ENCODE measurements at regions of chr11 and their contacts with region 1.

Region 1: DNA sequence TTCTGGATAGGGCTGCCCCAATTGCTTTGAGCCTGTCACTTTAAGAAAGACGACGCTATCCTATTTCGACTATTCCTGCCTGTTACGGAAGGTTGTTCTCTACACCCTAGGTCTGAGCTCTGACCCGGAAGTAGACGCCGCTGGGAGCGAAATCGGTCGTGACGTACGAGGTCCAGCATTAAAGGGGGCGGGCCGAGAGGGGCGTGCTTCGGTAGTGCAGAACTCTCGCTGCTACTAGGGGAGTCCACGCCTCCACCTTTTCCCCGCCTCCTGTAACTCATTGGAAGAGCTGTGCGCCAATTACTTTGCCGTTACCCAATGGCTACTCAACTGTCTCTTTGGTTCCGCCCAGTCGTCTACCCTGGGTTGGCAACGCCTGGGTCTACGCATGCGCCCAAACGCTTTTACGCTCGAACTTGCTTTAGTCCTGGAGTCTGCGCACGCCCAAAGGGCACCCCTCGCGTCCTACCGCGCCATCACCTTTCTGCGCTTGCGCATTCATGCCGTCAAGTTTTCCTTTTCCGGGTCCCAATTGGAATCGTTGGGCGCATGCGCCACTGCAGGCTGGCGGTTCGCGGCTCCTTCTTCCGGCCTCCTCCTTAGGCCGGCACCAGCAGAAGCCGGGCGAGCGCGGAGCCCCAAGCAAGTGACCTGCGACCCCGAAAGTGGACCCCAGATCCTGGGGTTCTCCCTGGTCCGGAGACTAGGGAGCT is at the start of gene PCNX3:
- DNase-seq: peak; percentile 95 to 100 (median 100)
- ATAC-seq: peak; percentile 92
- H3K4me3 ChIP-seq: peak within 1 kb of the TSS; percentile 89
- H3K4me3 Mint-ChIP-seq: peak within 1 kb of the TSS; percentile 94 to 99 (median 97)
- H3K27ac ChIP-seq: peak within 1 kb of the TSS; percentile 98
- H3K27ac Mint-ChIP-seq: peak within 1 kb of the TSS; percentile 90 to 99 (median 97)
- H3K4me1 ChIP-seq: peaks cover 42 to 45% of the 10 kb centered on the region in 2 donors
- H3K4me1 Mint-ChIP-seq: peaks cover 28 to 49% (median 39%) of the 10 kb centered on the region in 7 donors
- H3K27me3 ChIP-seq: no peaks in the 10 kb centered on the region
- H3K27me3 Mint-ChIP-seq: peaks cover 0 to 6% (median 0%) of the 10 kb centered on the region in 5 donors
- total RNA-seq, gene PCNX3: 50.4 to 64.9 (median 56.6) TPM

Region 2: GRCh38 chr11:65117216-65118096 is 497.9 kb before region 1 on chr11 and contains the start of gene ZNHIT2:
- CTCF ChIA-PET with region 1: no interaction called
- POLR2A ChIA-PET with region 1: interaction called, 3 read pairs
- intact Hi-C with region 1: loop called in 1 of 2 experiments (anchors 1 kb)
- DNase-seq: peak; percentile 94 to 100 (median 100)
- ATAC-seq: peak; percentile 85
- H3K4me3 ChIP-seq: peak within 1 kb of the TSS; percentile 92
- H3K4me3 Mint-ChIP-seq: peak within 1 kb of the TSS; percentile 91 to 95 (median 92)
- H3K27ac ChIP-seq: peak within 1 kb of the TSS; percentile 99
- H3K27ac Mint-ChIP-seq: peak within 1 kb of the TSS; percentile 86 to 100 (median 96)
- H3K4me1 ChIP-seq: peaks cover 28 to 37% of the 10 kb centered on the region in 2 donors
- H3K4me1 Mint-ChIP-seq: peaks cover 20 to 77% (median 53%) of the 10 kb centered on the region in 7 donors
- H3K27me3 ChIP-seq: no peaks in the 10 kb centered on the region
- H3K27me3 Mint-ChIP-seq: no peaks in the 10 kb centered on the region
- total RNA-seq, gene ZNHIT2: 9.9 to 18.2 (median 11.3) TPM

Region 3: DNA sequence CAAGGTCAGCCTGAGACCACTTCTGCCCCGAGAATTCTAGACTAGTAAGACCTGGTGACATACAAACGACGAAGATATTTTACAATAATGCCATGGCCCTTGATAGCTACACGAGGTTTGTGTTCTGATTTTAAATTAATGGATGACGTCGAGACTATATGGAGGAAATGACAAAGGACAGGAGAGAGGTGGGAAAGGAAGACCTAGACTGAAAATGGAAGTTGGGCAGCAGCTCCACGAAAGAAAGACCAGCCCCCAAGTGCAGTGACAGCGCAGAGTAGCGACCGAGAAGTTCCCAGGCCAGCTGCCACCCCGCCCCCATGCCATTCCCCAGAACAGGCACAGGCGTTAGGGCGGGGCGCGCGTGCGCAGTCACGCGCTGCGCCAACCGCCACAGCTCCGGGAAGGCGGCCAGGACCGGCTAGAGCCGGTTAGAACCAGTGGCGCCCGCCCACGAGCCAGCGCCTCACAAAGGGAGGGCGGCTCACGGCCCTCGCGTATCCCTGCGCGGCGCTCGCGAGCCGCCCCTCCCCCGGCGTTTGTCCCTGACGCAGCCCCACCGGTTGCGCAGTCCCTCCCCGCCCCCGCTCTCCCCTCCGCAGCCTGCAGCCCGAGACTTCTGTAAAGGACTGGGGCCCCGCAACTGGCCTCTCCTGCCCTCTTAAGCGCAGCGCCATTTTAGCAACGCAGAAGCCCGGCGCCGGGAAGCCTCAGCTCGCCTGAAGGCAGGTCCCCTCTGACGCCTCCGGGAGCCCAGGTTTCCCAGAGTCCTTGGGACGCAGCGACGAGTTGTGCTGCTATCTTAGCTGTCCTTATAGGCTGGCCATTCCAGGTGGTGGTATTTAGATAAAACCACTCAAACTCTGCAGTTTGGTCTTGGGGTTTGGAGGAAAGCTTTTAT is 118.0 kb before region 1 on chr11:
- CTCF ChIA-PET with region 1: no interaction called
- POLR2A ChIA-PET with region 1: interaction called, 34 read pairs
- intact Hi-C with region 1: no loop called
- DNase-seq: peak; percentile 95 to 99 (median 98)
- ATAC-seq: peak; percentile 89
- H3K4me3 ChIP-seq: peak overlapping the region; percentile 99
- H3K4me3 Mint-ChIP-seq: no peak overlapping the region
- H3K27ac ChIP-seq: peak overlapping the region; percentile 99
- H3K27ac Mint-ChIP-seq: no peak overlapping the region
- H3K4me1 ChIP-seq: peaks cover 11 to 12% of the 10 kb centered on the region in 2 donors
- H3K4me1 Mint-ChIP-seq: peaks cover 13 to 43% (median 24%) of the 10 kb centered on the region in 7 donors
- H3K27me3 ChIP-seq: no peaks in the 10 kb centered on the region
- H3K27me3 Mint-ChIP-seq: peaks cover 0 to 6% (median 0%) of the 10 kb centered on the region in 5 donors

Region 4: GRCh38 chr11:65588199-65589054 is 27.0 kb before region 1 on chr11:
- CTCF ChIA-PET with region 1: interaction called, 12 read pairs
- POLR2A ChIA-PET with region 1: interaction called, 6 read pairs
- intact Hi-C with region 1: loop called (anchors 1 to 2 kb)
- DNase-seq: peak; percentile 35 to 83 (median 75)
- ATAC-seq: peak; percentile 91
- H3K4me3 ChIP-seq: no peak overlapping the region
- H3K4me3 Mint-ChIP-seq: peak overlapping the region in 1 of 10 donors; percentile 76
- H3K27ac ChIP-seq: peak overlapping the region; percentile 43
- H3K27ac Mint-ChIP-seq: peak overlapping the region; percentile 38 to 86 (median 76)
- H3K4me1 ChIP-seq: peaks cover 11 to 16% of the 10 kb centered on the region in 2 donors
- H3K4me1 Mint-ChIP-seq: peaks cover 16 to 43% (median 21%) of the 10 kb centered on the region in 7 donors
- H3K27me3 ChIP-seq: no peaks in the 10 kb centered on the region
- H3K27me3 Mint-ChIP-seq: no peaks in the 10 kb centered on the region

Region 5: GRCh38 chr11:65662799-65663638 is 47.6 kb after region 1 on chr11 and contains the start of gene RELA:
- CTCF ChIA-PET with region 1: interaction called, 3 read pairs
- POLR2A ChIA-PET with region 1: interaction called, 46 read pairs
- intact Hi-C with region 1: loop called (anchors 1 kb)
- DNase-seq: peak; percentile 84 to 92 (median 89)
- ATAC-seq: peak; percentile 92
- H3K4me3 ChIP-seq: peak within 1 kb of the TSS; percentile 85
- H3K4me3 Mint-ChIP-seq: peak within 1 kb of the TSS; percentile 86 to 93 (median 90)
- H3K27ac ChIP-seq: peak within 1 kb of the TSS; percentile 99
- H3K27ac Mint-ChIP-seq: peak within 1 kb of the TSS; percentile 86 to 95 (median 92)
- H3K4me1 ChIP-seq: peaks cover 20 to 33% of the 10 kb centered on the region in 2 donors
- H3K4me1 Mint-ChIP-seq: peaks cover 10 to 43% (median 31%) of the 10 kb centered on the region in 7 donors
- H3K27me3 ChIP-seq: no peaks in the 10 kb centered on the region
- H3K27me3 Mint-ChIP-seq: no peaks in the 10 kb centered on the region
- total RNA-seq, gene RELA: 106 to 303 (median 165) TPM

Region 6: GRCh38 chr11:65961232-65961901 is 346.0 kb after region 1 on chr11 and contains the start of gene SART1:
- CTCF ChIA-PET with region 1: no interaction called
- POLR2A ChIA-PET with region 1: no interaction called
- intact Hi-C with region 1: loop called in 1 of 2 experiments (anchors 1 kb)
- DNase-seq: peak; percentile 81 to 97 (median 94)
- ATAC-seq: peak; percentile 96
- H3K4me3 ChIP-seq: peak within 1 kb of the TSS; percentile 83
- H3K4me3 Mint-ChIP-seq: peak within 1 kb of the TSS; percentile 93 to 99 (median 98)
- H3K27ac ChIP-seq: peak within 1 kb of the TSS; percentile 96
- H3K27ac Mint-ChIP-seq: peak within 1 kb of the TSS; percentile 96 to 99 (median 98)
- H3K4me1 ChIP-seq: peaks cover 27 to 38% of the 10 kb centered on the region in 2 donors
- H3K4me1 Mint-ChIP-seq: peaks cover 23 to 64% (median 54%) of the 10 kb centered on the region in 7 donors
- H3K27me3 ChIP-seq: no peaks in the 10 kb centered on the region
- H3K27me3 Mint-ChIP-seq: no peaks in the 10 kb centered on the region
- total RNA-seq, gene SART1: 65.9 to 102 (median 90.8) TPM

Measured in naive thymus-derived CD4-positive, alpha-beta T cell (primary cell).